ENCODE measurements at regions of chr9 and their contacts with region 1.

Region 1: DNA sequence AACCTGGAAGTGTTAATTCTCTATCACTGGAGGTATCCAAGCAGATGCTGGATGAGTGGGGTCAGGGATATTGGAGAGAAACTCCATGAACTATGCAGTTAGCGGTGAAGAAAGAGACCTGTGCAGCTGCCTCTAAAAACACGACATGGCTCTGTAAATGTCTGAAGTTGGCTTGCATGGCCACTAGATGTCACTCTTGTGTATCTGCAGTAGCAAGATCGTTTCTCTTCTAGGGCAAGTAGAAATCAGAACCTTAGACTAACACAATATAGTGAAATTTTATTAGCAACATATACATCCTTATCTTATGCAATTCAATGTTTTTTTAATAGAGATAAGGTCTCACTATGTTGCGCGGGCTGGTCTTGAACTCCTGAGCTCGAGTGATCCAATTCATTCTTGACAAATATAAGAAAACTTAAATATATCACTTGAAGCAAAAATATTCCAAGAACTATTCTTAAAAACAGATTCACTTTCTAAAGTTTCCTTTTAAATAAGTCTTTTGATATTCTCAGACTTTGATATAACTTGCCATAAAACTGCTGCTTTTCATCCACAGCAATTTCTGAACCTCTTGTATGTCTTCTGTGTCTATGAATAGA is 2.9 kb downstream of the OR2S2 start:
- DNase-seq: peak; percentile 64
- ATAC-seq: peak; percentile 83
- H3K4me3 Mint-ChIP-seq: no peak overlapping the region
- H3K27ac Mint-ChIP-seq: no peak overlapping the region
- H3K4me1 Mint-ChIP-seq: peaks cover 4% of the 10 kb centered on the region
- H3K27me3 Mint-ChIP-seq: peaks cover 8% of the 10 kb centered on the region

Region 2: DNA sequence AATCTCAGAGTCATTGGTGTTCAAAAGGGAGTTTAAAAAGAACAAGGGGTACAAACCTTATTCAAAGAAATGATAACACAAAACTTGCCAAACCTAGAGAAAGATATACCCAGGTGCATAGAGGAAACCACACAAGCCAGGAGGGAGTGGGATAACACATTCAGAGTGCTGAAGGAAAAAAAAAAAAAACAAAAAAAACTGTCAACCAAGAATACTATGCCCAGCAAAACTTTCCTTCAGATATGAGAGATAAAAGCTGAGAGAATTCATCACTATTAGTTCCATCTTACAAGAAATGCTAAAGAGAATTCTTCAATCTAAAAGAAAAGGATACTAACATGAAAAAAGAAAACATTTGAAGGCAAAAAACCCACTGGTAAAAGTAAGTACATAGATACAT is 361.5 kb before region 1 on chr9:
- CTCF ChIA-PET with region 1: no interaction called
- POLR2A ChIA-PET with region 1: no interaction called
- intact Hi-C with region 1: no loop called
- DNase-seq: no peak
- ATAC-seq: no peak
- H3K4me3 Mint-ChIP-seq: no peak overlapping the region
- H3K27ac Mint-ChIP-seq: no peak overlapping the region
- H3K4me1 Mint-ChIP-seq: no peaks in the 10 kb centered on the region
- H3K27me3 Mint-ChIP-seq: no peaks in the 10 kb centered on the region

Region 3: GRCh38 chr9:35903049-35903448 is 52.0 kb before region 1 on chr9:
- CTCF ChIA-PET with region 1: interaction called, 13 read pairs
- POLR2A ChIA-PET with region 1: no interaction called
- intact Hi-C with region 1: no loop called
- DNase-seq: peak; percentile 52
- ATAC-seq: peak; percentile 71
- H3K4me3 Mint-ChIP-seq: no peak overlapping the region
- H3K27ac Mint-ChIP-seq: no peak overlapping the region
- H3K4me1 Mint-ChIP-seq: peaks cover 21% of the 10 kb centered on the region
- H3K27me3 Mint-ChIP-seq: no peaks in the 10 kb centered on the region

Region 4: GRCh38 chr9:36008774-36009300 is 53.8 kb after region 1 on chr9:
- CTCF ChIA-PET with region 1: interaction called, 16 read pairs
- POLR2A ChIA-PET with region 1: no interaction called
- intact Hi-C with region 1: no loop called
- DNase-seq: peak; percentile 77
- ATAC-seq: peak; percentile 87
- H3K4me3 Mint-ChIP-seq: no peak overlapping the region
- H3K27ac Mint-ChIP-seq: no peak overlapping the region
- H3K4me1 Mint-ChIP-seq: peaks cover 23% of the 10 kb centered on the region
- H3K27me3 Mint-ChIP-seq: peaks cover 24% of the 10 kb centered on the region

Region 5: GRCh38 chr9:36023260-36024048 is 68.4 kb after region 1 on chr9:
- CTCF ChIA-PET with region 1: interaction called, 121 read pairs
- POLR2A ChIA-PET with region 1: no interaction called
- intact Hi-C with region 1: loop called (anchors 1 kb)
- DNase-seq: peak; percentile 83
- ATAC-seq: peak; percentile 90
- H3K4me3 Mint-ChIP-seq: no peak overlapping the region
- H3K27ac Mint-ChIP-seq: no peak overlapping the region
- H3K4me1 Mint-ChIP-seq: no peaks in the 10 kb centered on the region
- H3K27me3 Mint-ChIP-seq: no peaks in the 10 kb centered on the region

Region 6: GRCh38 chr9:36166101-36166927 is 211.3 kb after region 1 on chr9:
- CTCF ChIA-PET with region 1: interaction called, 8 read pairs
- POLR2A ChIA-PET with region 1: no interaction called
- intact Hi-C with region 1: loop called (anchors 1 to 2 kb)
- DNase-seq: peak; percentile 90
- ATAC-seq: peak; percentile 97
- H3K4me3 Mint-ChIP-seq: peak overlapping the region; percentile 69
- H3K27ac Mint-ChIP-seq: peak overlapping the region; percentile 31
- H3K4me1 Mint-ChIP-seq: peaks cover 6% of the 10 kb centered on the region
- H3K27me3 Mint-ChIP-seq: no peaks in the 10 kb centered on the region

Region 7: DNA sequence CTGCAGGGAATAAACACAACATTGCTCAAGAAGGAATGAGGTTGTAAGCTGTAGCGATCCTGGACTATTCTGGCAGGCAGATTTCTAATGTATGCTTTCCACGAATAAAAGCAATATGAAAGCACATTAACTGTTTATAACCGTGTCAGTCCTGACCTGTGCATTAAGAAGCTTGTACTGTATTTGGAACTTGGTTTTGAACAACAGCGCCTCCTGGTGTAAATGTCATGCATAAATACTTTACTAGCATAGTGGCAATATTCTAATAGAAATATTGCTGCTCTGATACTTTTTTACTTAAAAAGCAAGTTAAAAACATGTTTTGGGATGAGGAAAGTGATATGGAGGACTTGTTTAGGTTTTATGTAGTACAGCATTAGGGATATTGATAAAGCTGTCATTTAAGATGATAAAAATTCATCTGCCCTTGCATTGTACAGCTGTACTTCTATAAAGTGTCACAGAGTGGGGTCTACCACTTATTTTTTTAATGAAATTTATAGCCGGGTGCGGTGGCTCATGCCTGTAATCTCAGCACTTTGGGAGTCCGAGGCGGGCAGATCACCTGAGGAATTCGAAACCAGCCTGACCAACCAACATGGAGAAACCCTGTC is 373.9 kb after region 1 on chr9:
- CTCF ChIA-PET with region 1: interaction called, 5 read pairs
- POLR2A ChIA-PET with region 1: no interaction called
- intact Hi-C with region 1: loop called in 1 of 2 experiments (anchors 10 kb)
- DNase-seq: peak; percentile 58
- ATAC-seq: peak; percentile 81
- H3K4me3 Mint-ChIP-seq: no peak overlapping the region
- H3K27ac Mint-ChIP-seq: no peak overlapping the region
- H3K4me1 Mint-ChIP-seq: no peaks in the 10 kb centered on the region
- H3K27me3 Mint-ChIP-seq: no peaks in the 10 kb centered on the region